CD4-positive, alpha-beta memory T cell (primary cell): ENCODE measurements at regions of chr10 and their contacts with region 1.

Region 1: DNA sequence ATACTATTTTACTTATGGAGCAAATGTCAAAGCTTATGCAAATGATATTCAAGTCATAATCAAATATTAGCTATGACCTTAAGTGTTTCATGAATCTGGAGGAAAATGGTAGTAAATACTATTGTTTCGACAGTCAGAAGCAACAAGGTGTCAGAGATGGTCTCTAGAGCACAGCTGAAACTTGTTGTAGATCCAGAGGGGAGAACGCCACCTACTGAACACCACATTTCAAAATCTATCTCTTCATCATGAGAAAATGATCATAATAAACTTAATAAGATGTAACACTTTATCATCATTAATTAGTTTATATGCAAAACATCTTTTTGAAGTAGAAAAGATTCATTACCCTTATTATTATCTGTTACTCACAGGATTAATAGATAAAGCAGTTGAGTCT is 418.7 kb downstream of the GATA3 start:
- DNase-seq: peak in 4 of 5 donors; percentile 46 to 69 (median 64)
- H3K4me3 ChIP-seq: no peak overlapping the region
- H3K4me3 Mint-ChIP-seq: no peak overlapping the region
- H3K27ac ChIP-seq: no peak overlapping the region
- H3K27ac Mint-ChIP-seq: peak overlapping the region in 3 of 7 donors; percentile 35 to 48 (median 36)
- H3K4me1 ChIP-seq: no peaks in the 10 kb centered on the region
- H3K4me1 Mint-ChIP-seq: peaks cover 0 to 5% (median 3%) of the 10 kb centered on the region in 4 donors
- H3K27me3 ChIP-seq: no peaks in the 10 kb centered on the region
- H3K27me3 Mint-ChIP-seq: peaks cover 2 to 6% of the 10 kb centered on the region in 2 donors

Region 2: GRCh38 chr10:7872041-7872442 is 601.2 kb before region 1 on chr10:
- CTCF ChIA-PET with region 1: interaction called, 6 read pairs
- POLR2A ChIA-PET with region 1: no interaction called
- intact Hi-C with region 1: loop called (anchors 1 kb)
- DNase-seq: peak in 4 of 5 donors; percentile 37 to 44 (median 42)
- H3K4me3 ChIP-seq: no peak overlapping the region
- H3K4me3 Mint-ChIP-seq: peak overlapping the region in 7 of 8 donors; percentile 51 to 84 (median 77)
- H3K27ac ChIP-seq: no peak overlapping the region
- H3K27ac Mint-ChIP-seq: peak overlapping the region in 2 of 7 donors; percentile 35 to 84
- H3K4me1 ChIP-seq: no peaks in the 10 kb centered on the region
- H3K4me1 Mint-ChIP-seq: peaks cover 10 to 13% (median 12%) of the 10 kb centered on the region in 4 donors
- H3K27me3 ChIP-seq: no peaks in the 10 kb centered on the region
- H3K27me3 Mint-ChIP-seq: no peaks in the 10 kb centered on the region

Region 3: GRCh38 chr10:8053446-8054290 is 419.5 kb before region 1 on chr10:
- CTCF ChIA-PET with region 1: interaction called, 10 read pairs
- POLR2A ChIA-PET with region 1: interaction called, 45 read pairs
- intact Hi-C with region 1: loop called (anchors 1 kb)
- DNase-seq: peak; percentile 86 to 92 (median 89)
- H3K4me3 ChIP-seq: peak overlapping the region; percentile 84 to 94
- H3K4me3 Mint-ChIP-seq: peak overlapping the region; percentile 93 to 99 (median 98)
- H3K27ac ChIP-seq: peak overlapping the region; percentile 83
- H3K27ac Mint-ChIP-seq: peak overlapping the region; percentile 95 to 99 (median 98)
- H3K4me1 ChIP-seq: peaks cover 60% of the 10 kb centered on the region
- H3K4me1 Mint-ChIP-seq: peaks cover 13 to 66% (median 35%) of the 10 kb centered on the region in 4 donors
- H3K27me3 ChIP-seq: peaks cover 36% of the 10 kb centered on the region
- H3K27me3 Mint-ChIP-seq: peaks cover 20 to 27% of the 10 kb centered on the region in 2 donors

Region 4: DNA sequence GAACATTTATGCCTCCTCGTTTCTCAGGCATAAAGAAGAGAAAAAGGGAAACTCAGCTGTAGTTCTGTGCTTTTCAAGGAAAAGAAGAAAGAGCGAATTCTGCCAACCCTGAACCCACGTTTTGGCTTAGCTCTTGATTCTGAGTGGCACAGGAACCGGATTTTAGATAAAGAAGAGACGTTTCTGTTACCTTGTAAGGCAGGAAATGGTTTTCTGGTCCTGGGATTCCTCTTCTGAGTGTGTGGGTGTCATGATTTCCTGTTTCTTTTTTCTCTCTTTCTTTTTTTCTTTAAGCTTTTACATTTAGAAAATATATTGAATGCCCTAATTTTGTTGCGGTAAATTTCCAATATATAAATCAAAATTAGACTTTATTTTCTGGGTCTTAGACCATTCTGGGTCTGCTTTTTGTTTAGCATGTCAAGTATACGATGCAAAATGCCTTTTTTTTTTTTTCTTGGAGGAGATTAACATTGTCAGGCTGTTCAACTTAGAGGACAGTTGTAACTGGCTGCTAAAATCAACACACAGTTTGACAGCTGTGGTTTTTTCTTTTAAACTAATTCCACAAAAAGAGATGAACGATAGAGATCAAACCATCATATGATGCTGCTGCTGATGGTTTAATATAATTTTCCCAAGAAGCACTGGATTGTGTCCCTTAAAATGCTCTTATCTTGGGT is 227.9 kb before region 1 on chr10:
- CTCF ChIA-PET with region 1: interaction called, 3 read pairs
- POLR2A ChIA-PET with region 1: no interaction called
- intact Hi-C with region 1: loop called (anchors 10 kb)
- DNase-seq: peak in 4 of 5 donors; percentile 55 to 64 (median 59)
- H3K4me3 ChIP-seq: peak overlapping the region in 1 of 2 donors; percentile 34
- H3K4me3 Mint-ChIP-seq: peak overlapping the region; percentile 51 to 90 (median 74)
- H3K27ac ChIP-seq: peak overlapping the region; percentile 41
- H3K27ac Mint-ChIP-seq: peak overlapping the region; percentile 75 to 95 (median 93)
- H3K4me1 ChIP-seq: peaks cover 52% of the 10 kb centered on the region
- H3K4me1 Mint-ChIP-seq: peaks cover 39 to 74% (median 55%) of the 10 kb centered on the region in 4 donors
- H3K27me3 ChIP-seq: no peaks in the 10 kb centered on the region
- H3K27me3 Mint-ChIP-seq: no peaks in the 10 kb centered on the region

Region 5: GRCh38 chr10:8404391-8405120 is 68.6 kb before region 1 on chr10:
- CTCF ChIA-PET with region 1: interaction called, 8 read pairs
- POLR2A ChIA-PET with region 1: interaction called, 4 read pairs
- intact Hi-C with region 1: loop called (anchors 2 kb)
- DNase-seq: peak; percentile 82 to 95 (median 92)
- H3K4me3 ChIP-seq: peak overlapping the region; percentile 12 to 34
- H3K4me3 Mint-ChIP-seq: peak overlapping the region; percentile 56 to 84 (median 78)
- H3K27ac ChIP-seq: peak overlapping the region; percentile 95
- H3K27ac Mint-ChIP-seq: peak overlapping the region; percentile 92 to 100 (median 98)
- H3K4me1 ChIP-seq: peaks cover 87% of the 10 kb centered on the region
- H3K4me1 Mint-ChIP-seq: peaks cover 71 to 91% (median 82%) of the 10 kb centered on the region in 4 donors
- H3K27me3 ChIP-seq: no peaks in the 10 kb centered on the region
- H3K27me3 Mint-ChIP-seq: no peaks in the 10 kb centered on the region

Region 6: GRCh38 chr10:8534096-8534495 is 60.9 kb after region 1 on chr10:
- CTCF ChIA-PET with region 1: no interaction called
- POLR2A ChIA-PET with region 1: no interaction called
- intact Hi-C with region 1: no loop called
- DNase-seq: no peak
- H3K4me3 ChIP-seq: no peak overlapping the region
- H3K4me3 Mint-ChIP-seq: no peak overlapping the region
- H3K27ac ChIP-seq: no peak overlapping the region
- H3K27ac Mint-ChIP-seq: no peak overlapping the region
- H3K4me1 ChIP-seq: no peaks in the 10 kb centered on the region
- H3K4me1 Mint-ChIP-seq: peaks cover 0 to 5% (median 3%) of the 10 kb centered on the region in 4 donors
- H3K27me3 ChIP-seq: no peaks in the 10 kb centered on the region
- H3K27me3 Mint-ChIP-seq: peaks cover 0 to 7% of the 10 kb centered on the region in 2 donors

Region 7: DNA sequence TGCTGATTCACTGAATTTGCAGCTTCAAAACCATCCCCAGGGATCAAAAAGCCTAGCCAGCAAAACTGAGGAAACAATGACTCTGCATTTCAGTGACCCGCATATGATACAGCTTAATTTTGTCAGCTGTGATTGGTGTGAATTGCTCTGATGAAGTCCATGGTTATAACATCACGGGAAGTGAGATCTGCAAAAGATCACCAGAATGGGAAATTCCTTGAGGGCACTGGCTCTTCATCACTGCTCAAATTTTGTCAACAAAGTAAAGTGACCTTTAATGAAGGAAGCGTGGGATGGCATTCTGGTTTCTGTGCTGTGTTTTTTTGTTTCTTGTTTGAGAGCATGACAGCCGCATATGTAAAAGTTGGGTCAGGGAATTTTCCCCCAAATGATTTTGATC is 327.2 kb after region 1 on chr10:
- CTCF ChIA-PET with region 1: no interaction called
- POLR2A ChIA-PET with region 1: no interaction called
- intact Hi-C with region 1: no loop called
- DNase-seq: no peak
- H3K4me3 ChIP-seq: no peak overlapping the region
- H3K4me3 Mint-ChIP-seq: no peak overlapping the region
- H3K27ac ChIP-seq: no peak overlapping the region
- H3K27ac Mint-ChIP-seq: no peak overlapping the region
- H3K4me1 ChIP-seq: no peaks in the 10 kb centered on the region
- H3K4me1 Mint-ChIP-seq: peaks cover 0 to 9% (median 2%) of the 10 kb centered on the region in 4 donors
- H3K27me3 ChIP-seq: no peaks in the 10 kb centered on the region
- H3K27me3 Mint-ChIP-seq: peaks cover 4 to 7% of the 10 kb centered on the region in 2 donors

Region 8: GRCh38 chr10:9209105-9209798 is 736.0 kb after region 1 on chr10:
- CTCF ChIA-PET with region 1: interaction called, 8 read pairs
- POLR2A ChIA-PET with region 1: interaction called, 3 read pairs
- intact Hi-C with region 1: loop called (anchors 1 kb)
- DNase-seq: peak; percentile 50 to 66 (median 60)
- H3K4me3 ChIP-seq: no peak overlapping the region
- H3K4me3 Mint-ChIP-seq: peak overlapping the region in 2 of 8 donors; percentile 25 to 58
- H3K27ac ChIP-seq: no peak overlapping the region
- H3K27ac Mint-ChIP-seq: no peak overlapping the region
- H3K4me1 ChIP-seq: peaks cover 3% of the 10 kb centered on the region
- H3K4me1 Mint-ChIP-seq: no peaks in the 10 kb centered on the region
- H3K27me3 ChIP-seq: no peaks in the 10 kb centered on the region
- H3K27me3 Mint-ChIP-seq: peaks cover 3 to 6% of the 10 kb centered on the region in 2 donors

Region 9: DNA sequence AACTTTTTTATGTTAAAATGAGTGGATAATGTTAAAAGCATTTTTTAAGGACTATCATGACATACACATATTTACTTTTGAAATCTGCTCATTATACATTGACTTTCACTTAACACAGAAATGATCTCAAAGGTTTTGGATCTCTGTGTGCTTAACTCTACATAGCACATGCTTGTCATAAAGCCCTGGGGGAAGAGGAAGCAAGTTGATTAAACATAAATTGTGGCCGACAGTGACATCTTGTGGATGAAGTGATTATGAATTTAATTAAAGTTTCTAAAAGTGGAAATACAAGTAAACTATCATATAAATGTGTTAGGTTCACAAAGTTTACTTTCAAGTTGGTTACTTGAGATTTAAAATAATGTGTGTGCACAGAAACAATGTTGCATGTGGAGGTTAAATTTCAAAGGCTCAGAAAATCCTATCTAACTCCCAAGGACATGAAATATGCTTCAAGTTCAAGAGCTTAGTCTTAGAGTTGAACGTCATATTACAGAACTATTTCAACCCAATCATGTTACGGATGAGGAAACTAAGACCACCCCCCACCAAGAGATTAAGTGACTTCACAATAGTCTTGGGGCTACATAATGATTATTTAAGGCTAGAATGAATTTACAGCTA is 829.0 kb after region 1 on chr10:
- CTCF ChIA-PET with region 1: no interaction called
- POLR2A ChIA-PET with region 1: no interaction called
- intact Hi-C with region 1: loop called (anchors 10 kb)
- DNase-seq: peak in 4 of 5 donors; percentile 45 to 48 (median 48)
- H3K4me3 ChIP-seq: no peak overlapping the region
- H3K4me3 Mint-ChIP-seq: no peak overlapping the region
- H3K27ac ChIP-seq: no peak overlapping the region
- H3K27ac Mint-ChIP-seq: no peak overlapping the region
- H3K4me1 ChIP-seq: no peaks in the 10 kb centered on the region
- H3K4me1 Mint-ChIP-seq: no peaks in the 10 kb centered on the region
- H3K27me3 ChIP-seq: no peaks in the 10 kb centered on the region
- H3K27me3 Mint-ChIP-seq: peaks cover 9 to 13% of the 10 kb centered on the region in 2 donors